ENCODE measurements at regions of chr1 and their contacts with region 1.

Region 1: GRCh38 chr1:171801487-171801891 is 20.0 kb downstream of the METTL13 start:
- DNase-seq: no peak
- H3K4me3 Mint-ChIP-seq: no peak overlapping the region
- H3K27ac Mint-ChIP-seq: no peak overlapping the region
- H3K4me1 Mint-ChIP-seq: peaks cover 3% of the 10 kb centered on the region
- H3K27me3 Mint-ChIP-seq: no peaks in the 10 kb centered on the region

Region 2: GRCh38 chr1:171654942-171655745 is 146.3 kb before region 1 on chr1:
- CTCF ChIA-PET with region 1: interaction called, 12 read pairs
- POLR2A ChIA-PET with region 1: no interaction called
- intact Hi-C with region 1: no loop called
- DNase-seq: peak; percentile 90
- H3K4me3 Mint-ChIP-seq: peak overlapping the region; percentile 43
- H3K27ac Mint-ChIP-seq: no peak overlapping the region
- H3K4me1 Mint-ChIP-seq: peaks cover 11% of the 10 kb centered on the region
- H3K27me3 Mint-ChIP-seq: peaks cover 5% of the 10 kb centered on the region

Region 3: DNA sequence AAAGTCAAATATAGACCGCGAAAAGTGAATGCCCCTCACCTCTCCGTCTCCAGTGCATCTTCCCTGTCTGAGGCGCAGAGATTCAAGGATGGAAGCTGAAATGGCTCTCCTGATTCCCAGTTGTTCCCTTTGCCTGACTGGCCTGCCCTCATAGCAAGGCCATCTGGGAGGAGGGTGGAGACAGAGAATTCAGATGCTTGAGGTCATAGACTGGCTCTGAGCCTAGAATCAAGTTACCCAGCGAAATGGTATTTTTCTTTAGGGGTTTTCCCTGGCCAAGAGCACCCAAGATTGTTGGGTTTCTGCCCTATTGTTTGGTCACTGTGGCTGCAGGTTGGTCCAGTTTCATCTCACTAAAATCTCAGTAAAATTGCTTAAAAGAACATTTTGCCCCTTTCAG is 12.8 kb before region 1 on chr1:
- CTCF ChIA-PET with region 1: interaction called, 19 read pairs
- POLR2A ChIA-PET with region 1: interaction called, 12 read pairs
- intact Hi-C with region 1: no loop called
- DNase-seq: no peak
- H3K4me3 Mint-ChIP-seq: no peak overlapping the region
- H3K27ac Mint-ChIP-seq: no peak overlapping the region
- H3K4me1 Mint-ChIP-seq: peaks cover 45% of the 10 kb centered on the region
- H3K27me3 Mint-ChIP-seq: no peaks in the 10 kb centered on the region

Region 4: DNA sequence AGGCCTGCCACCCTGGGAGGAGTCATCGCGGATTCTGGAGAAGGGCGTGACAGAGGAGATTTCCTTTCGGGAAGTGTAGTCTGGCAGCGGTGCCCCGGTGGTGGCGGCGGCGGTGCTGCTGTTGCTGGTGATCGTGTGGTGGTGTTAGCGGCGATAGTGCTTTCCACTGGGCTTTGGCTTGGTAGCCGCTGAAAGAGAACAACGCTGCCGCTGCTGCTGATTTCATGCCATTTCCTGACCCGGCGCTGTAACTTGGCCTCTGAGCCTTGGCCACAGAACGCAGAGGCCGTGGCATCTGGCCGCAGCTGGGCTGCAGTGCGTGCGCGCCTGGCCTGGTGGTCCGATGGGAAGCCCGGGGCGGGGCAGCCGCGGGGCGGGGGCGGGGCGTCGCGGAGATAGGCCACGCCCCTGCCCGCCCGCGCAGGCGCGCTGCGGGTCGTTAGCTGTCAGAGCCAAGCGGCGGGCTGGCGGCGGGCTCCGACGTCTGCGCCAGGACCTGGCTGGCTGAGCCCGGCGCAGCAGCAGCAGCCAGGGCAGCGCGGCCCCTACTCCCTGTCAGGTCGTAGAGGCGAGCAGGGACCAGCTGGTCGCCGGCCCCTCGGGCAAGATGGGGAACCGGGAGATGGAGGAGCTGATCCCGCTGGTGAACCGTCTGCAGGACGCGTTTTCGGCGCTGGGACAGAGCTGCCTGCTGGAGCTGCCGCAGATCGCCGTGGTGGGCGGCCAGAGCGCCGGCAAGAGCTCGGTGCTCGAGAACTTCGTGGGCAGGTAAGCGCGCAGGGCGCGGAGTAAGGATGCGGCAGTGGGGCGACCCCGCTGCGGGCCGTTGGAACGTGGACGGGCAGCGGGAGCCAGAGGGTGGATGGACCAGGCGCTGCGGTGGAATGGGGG is 39.8 kb after region 1 on chr1 and contains the start of gene DNM3:
- CTCF ChIA-PET with region 1: interaction called, 20 read pairs
- POLR2A ChIA-PET with region 1: interaction called, 3 read pairs
- intact Hi-C with region 1: loop called (anchors 5 kb)
- DNase-seq: peak; percentile 81
- H3K4me3 Mint-ChIP-seq: peak within 1 kb of the TSS; percentile 77
- H3K27ac Mint-ChIP-seq: no peak within 1 kb of the TSS
- H3K4me1 Mint-ChIP-seq: peaks cover 12% of the 10 kb centered on the region
- H3K27me3 Mint-ChIP-seq: peaks cover 14% of the 10 kb centered on the region
- total RNA-seq, gene DNM3: 0.93 to 1.2 TPM